Mammary epithelial cell (primary cell): ENCODE measurements at regions of chr10 and their contacts with region 1.

Region 1: DNA sequence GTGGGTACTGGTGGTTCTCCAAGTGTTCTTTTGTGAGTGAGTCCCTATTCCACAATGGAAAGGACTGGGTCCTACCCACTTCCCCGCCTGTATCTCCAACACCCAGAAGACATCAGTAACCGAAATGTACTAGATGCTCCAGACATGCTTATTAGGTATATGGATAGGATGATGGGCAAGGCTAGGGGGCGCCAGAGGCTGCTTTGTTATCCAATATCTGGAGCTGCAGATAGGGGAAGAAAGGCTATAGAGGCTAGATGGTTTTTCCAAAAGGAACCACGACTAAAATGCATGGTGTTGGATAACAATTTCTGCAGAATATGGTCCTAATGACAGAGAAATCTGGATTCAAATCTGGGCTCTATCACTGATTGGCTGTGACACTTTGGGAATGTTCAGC is 56.2 kb upstream of the TM9SF3 start:
- DNase-seq: no peak
- H3K4me3 ChIP-seq: no peak overlapping the region
- H3K27ac ChIP-seq: no peak overlapping the region
- H3K4me1 ChIP-seq: no peaks in the 10 kb centered on the region
- H3K27me3 ChIP-seq: no peaks in the 10 kb centered on the region
- CTCF ChIP-seq: peak; percentile 39 to 53

Region 2: DNA sequence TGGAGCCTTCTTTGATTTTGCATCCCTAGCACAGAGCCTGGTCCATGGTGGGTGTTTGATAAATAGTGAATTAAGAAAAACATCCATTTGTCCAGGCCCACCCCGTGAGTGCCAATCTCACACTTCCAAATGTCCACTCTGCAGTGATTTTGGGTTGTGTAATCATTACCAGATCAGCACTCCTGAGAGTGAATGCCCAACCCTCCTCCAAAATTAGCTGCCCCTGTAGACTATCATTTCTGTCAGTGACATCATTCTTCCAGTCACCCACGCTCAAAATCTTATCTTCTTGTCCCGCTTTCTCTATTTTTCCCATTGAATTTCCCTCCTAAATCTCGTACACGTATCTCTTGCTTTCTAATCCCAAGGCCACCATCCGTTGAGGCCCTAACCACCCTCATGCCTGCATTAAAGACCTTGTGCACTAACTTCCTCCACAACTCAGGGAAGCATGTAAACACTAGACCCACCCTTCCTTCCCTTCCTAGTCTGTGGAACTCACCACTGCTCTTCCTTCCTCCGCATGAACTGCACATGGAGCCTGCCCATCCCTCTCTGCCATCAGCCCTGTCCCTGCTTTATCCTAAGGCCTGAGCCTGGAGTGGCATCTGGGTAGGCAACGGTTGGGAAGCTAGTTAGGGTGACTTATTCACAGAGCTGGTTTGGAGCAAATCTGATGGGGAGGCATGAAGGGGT is 44.5 kb after region 1 on chr10:
- CTCF ChIA-PET with region 1: no interaction called
- dilution Hi-C with region 1: no loop called
- in situ Hi-C with region 1: no loop called
- intact Hi-C with region 1: no loop called
- DNase-seq: no peak
- H3K4me3 ChIP-seq: no peak overlapping the region
- H3K27ac ChIP-seq: no peak overlapping the region
- H3K4me1 ChIP-seq: no peaks in the 10 kb centered on the region
- H3K27me3 ChIP-seq: no peaks in the 10 kb centered on the region
- CTCF ChIP-seq: no peak

Region 3: GRCh38 chr10:96743988-96744585 is 101.1 kb after region 1 on chr10:
- CTCF ChIA-PET with region 1: interaction called, 6 read pairs
- dilution Hi-C with region 1: no loop called
- in situ Hi-C with region 1: no loop called
- intact Hi-C with region 1: loop called (anchors 5 kb)
- DNase-seq: no peak
- H3K4me3 ChIP-seq: no peak overlapping the region
- H3K27ac ChIP-seq: no peak overlapping the region
- H3K4me1 ChIP-seq: no peaks in the 10 kb centered on the region
- H3K27me3 ChIP-seq: no peaks in the 10 kb centered on the region
- CTCF ChIP-seq: peak in 1 of 2 donors; percentile 23

Region 4: GRCh38 chr10:97196223-97197029 is 553.5 kb after region 1 on chr10:
- CTCF ChIA-PET with region 1: no interaction called
- dilution Hi-C with region 1: no loop called
- in situ Hi-C with region 1: no loop called
- intact Hi-C with region 1: no loop called
- DNase-seq: peak; percentile 23
- H3K4me3 ChIP-seq: peak overlapping the region; percentile 2 to 36 (median 31)
- H3K27ac ChIP-seq: no peak overlapping the region
- H3K4me1 ChIP-seq: no peaks in the 10 kb centered on the region
- H3K27me3 ChIP-seq: no peaks in the 10 kb centered on the region
- CTCF ChIP-seq: peak; percentile 58 to 73